ENCODE measurements at regions of chrX and their contacts with region 1.

Region 1: GRCh38 chrX:79524642-79525041 is 157.5 kb upstream of the ITM2A start:
- DNase-seq: no peak
- H3K4me3 ChIP-seq: no peak overlapping the region
- H3K27ac ChIP-seq: no peak overlapping the region
- H3K4me1 ChIP-seq: no peaks in the 10 kb centered on the region
- H3K27me3 ChIP-seq: no peaks in the 10 kb centered on the region
- CTCF ChIP-seq: no peak

Region 2: GRCh38 chrX:78754917-78755316 is 769.7 kb before region 1 on chrX:
- intact Hi-C with region 1: no loop called
- DNase-seq: no peak
- H3K4me3 ChIP-seq: no peak overlapping the region
- H3K27ac ChIP-seq: no peak overlapping the region
- H3K4me1 ChIP-seq: peaks cover 0 to 4% (median 0%) of the 10 kb centered on the region in 4 donors
- H3K27me3 ChIP-seq: no peaks in the 10 kb centered on the region
- CTCF ChIP-seq: no peak

Region 3: GRCh38 chrX:79243691-79244090 is 281.0 kb before region 1 on chrX:
- intact Hi-C with region 1: no loop called
- DNase-seq: no peak
- H3K4me3 ChIP-seq: no peak overlapping the region
- H3K27ac ChIP-seq: no peak overlapping the region
- H3K4me1 ChIP-seq: no peaks in the 10 kb centered on the region
- H3K27me3 ChIP-seq: no peaks in the 10 kb centered on the region
- CTCF ChIP-seq: no peak

Region 4: DNA sequence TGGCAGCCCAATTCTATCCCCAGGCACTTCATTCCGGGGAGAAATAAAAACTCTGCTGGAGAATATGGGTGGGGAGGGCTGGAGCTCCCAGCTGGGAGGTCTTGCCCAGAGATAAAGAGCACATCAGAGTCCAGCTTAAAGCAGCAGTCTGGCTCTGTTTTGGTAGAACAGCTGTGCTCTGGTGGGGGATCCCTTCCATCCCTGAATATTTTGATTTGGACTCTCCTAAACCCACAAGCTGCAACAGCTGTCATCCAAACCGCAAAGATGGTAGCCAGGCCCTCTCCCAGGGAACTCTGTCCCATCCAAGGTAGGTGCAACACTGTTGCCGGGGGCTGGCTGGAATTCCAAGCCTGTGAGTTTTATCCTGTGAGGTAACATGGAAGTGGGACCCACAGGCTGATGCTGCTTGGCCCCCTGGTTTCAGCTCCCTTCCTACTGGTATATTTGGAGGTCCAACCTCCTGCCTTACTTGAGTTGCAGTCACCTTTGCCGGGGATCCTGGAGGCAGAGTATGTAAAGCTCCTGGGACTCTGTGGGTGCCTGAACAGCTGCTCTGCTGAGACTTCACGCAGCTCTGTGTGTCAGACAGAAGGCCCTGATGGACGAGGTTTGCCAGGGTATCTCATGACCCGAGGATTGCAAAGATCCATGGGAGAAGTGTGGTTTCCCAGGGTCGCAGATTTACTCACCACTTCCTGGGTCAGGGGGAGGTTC is 46.0 kb after region 1 on chrX:
- intact Hi-C with region 1: loop called (anchors 2 kb)
- DNase-seq: no peak
- H3K4me3 ChIP-seq: no peak overlapping the region
- H3K27ac ChIP-seq: no peak overlapping the region
- H3K4me1 ChIP-seq: no peaks in the 10 kb centered on the region
- H3K27me3 ChIP-seq: no peaks in the 10 kb centered on the region
- CTCF ChIP-seq: no peak